Left ventricle myocardium superior (tissue), 1 donor: ENCODE measurements at regions of chr11 and their contacts with region 1.

Region 1: GRCh38 chr11:116276051-116277044 is 496.4 kb downstream of the BUD13 start:
- DNase-seq: peak; percentile 84
- ATAC-seq: peak; percentile 88

Region 2: GRCh38 chr11:115324581-115325432 is 951.5 kb before region 1 on chr11:
- intact Hi-C with region 1: loop called (anchors 5 kb)
- DNase-seq: no peak
- ATAC-seq: peak; percentile 88

Region 3: DNA sequence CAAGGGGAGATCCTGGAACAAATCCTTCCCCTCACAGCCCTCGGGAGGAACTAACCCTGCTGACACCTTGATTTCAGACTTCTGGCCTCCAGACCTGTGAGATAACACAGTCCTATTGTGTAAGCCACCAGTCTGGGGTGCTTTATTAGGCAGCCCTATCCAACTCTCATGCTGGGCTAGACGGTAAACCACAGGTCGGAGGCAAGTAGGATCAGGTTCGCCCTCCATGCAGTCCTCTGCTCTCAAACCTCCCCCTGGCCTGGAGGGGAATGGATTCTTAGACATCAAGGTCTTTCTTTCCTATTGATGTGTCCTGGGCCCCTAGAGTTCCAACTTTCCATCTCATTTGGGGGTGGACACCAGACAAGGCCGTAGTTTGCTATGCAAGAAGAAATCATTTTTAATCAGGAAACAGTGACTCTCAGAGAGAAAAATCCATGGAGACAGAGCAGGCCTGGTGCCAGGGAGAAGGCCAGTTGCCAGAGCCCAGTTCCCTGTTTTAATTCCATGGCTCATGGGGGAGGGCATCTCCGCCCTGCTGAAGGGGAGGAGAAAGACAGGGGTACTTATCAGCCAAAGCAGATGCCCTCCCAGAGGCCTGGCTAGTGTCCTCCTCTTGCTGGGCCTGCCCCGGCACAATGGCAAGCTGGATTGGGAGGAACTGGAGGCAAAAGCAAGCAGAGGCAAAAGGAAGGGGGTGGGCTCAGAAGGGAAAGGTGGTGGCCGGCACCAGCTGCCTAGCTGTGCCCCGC is 95.7 kb before region 1 on chr11:
- intact Hi-C with region 1: no loop called
- DNase-seq: no peak
- ATAC-seq: peak; percentile 33